Heart right ventricle (tissue), 16 donors: ENCODE measurements at regions of chr15 and their contacts with region 1.

Region 1: GRCh38 chr15:71752604-71753289 is 57.6 kb upstream of the NR2E3 start:
- DNase-seq: no peak
- ATAC-seq: peak in 2 of 8 donors; percentile 39 to 53
- H3K4me3 ChIP-seq: no peak overlapping the region
- H3K27ac ChIP-seq: no peak overlapping the region
- H3K4me1 ChIP-seq: peaks cover 0 to 16% (median 5%) of the 10 kb centered on the region in 9 donors
- H3K27me3 ChIP-seq: no peaks in the 10 kb centered on the region
- CTCF ChIP-seq: peak in 7 of 9 donors; percentile 32 to 59 (median 47)

Region 2: DNA sequence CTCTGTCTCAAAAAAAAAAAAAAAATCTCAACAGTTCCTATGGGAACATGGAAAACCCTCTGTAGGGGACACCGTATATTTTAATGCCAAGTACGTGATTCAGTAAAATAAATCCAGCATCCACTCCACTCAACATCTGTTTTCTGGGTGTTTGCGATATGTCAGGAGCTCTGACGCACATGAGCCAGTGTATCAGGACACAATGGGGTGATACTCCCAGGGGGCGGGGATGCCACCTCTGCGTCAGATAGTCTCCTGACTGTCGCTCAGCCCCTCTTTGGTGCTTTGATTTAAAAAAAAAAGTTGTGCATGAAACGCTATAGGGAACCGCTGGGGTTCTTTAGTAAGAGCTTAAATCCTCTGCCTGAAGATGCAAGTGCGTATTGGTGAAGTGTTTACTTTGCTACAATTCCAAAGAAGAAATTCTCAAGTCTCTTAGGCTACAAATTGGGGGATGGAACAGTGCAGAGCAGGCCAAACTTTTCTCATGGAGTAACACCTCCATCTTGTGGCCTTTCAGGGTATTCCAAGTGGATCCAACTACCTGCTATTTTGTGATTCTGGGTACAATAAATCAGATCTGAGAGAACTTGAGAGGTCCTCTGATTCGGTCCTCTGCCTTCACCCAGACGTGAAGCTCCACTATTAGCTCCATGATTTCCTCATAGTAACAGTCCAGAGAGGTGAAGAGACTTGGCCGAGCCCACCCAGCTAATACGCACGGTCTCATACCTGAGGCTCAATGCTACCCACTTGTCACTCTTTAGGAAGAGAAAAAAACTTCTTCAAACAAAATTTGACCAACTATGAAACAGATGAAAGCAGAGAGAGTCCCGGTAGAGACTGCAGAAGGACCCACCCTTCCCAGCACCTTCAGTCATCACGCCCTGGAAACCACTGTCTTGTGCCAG is 48.3 kb after region 1 on chr15:
- intact Hi-C with region 1: loop called in 3 of 10 experiments (anchors 2 to 10 kb)
- DNase-seq: peak in 1 of 2 donors; percentile 40
- ATAC-seq: peak; percentile 65 to 90 (median 80)
- H3K4me3 ChIP-seq: no peak overlapping the region
- H3K27ac ChIP-seq: no peak overlapping the region
- H3K4me1 ChIP-seq: peaks cover 0 to 11% (median 5%) of the 10 kb centered on the region in 9 donors
- H3K27me3 ChIP-seq: peaks cover 0 to 4% (median 0%) of the 10 kb centered on the region in 7 donors
- CTCF ChIP-seq: peak; percentile 74 to 92 (median 85)

Region 3: GRCh38 chr15:71874245-71874644 is 121.5 kb after region 1 on chr15:
- intact Hi-C with region 1: no loop called
- DNase-seq: no peak
- ATAC-seq: no peak
- H3K4me3 ChIP-seq: no peak overlapping the region
- H3K27ac ChIP-seq: no peak overlapping the region
- H3K4me1 ChIP-seq: no peaks in the 10 kb centered on the region
- H3K27me3 ChIP-seq: no peaks in the 10 kb centered on the region
- CTCF ChIP-seq: no peak